CD4-positive, alpha-beta T cell (primary cell): ENCODE measurements at regions of chr7 and their contacts with region 1.

Region 1: DNA sequence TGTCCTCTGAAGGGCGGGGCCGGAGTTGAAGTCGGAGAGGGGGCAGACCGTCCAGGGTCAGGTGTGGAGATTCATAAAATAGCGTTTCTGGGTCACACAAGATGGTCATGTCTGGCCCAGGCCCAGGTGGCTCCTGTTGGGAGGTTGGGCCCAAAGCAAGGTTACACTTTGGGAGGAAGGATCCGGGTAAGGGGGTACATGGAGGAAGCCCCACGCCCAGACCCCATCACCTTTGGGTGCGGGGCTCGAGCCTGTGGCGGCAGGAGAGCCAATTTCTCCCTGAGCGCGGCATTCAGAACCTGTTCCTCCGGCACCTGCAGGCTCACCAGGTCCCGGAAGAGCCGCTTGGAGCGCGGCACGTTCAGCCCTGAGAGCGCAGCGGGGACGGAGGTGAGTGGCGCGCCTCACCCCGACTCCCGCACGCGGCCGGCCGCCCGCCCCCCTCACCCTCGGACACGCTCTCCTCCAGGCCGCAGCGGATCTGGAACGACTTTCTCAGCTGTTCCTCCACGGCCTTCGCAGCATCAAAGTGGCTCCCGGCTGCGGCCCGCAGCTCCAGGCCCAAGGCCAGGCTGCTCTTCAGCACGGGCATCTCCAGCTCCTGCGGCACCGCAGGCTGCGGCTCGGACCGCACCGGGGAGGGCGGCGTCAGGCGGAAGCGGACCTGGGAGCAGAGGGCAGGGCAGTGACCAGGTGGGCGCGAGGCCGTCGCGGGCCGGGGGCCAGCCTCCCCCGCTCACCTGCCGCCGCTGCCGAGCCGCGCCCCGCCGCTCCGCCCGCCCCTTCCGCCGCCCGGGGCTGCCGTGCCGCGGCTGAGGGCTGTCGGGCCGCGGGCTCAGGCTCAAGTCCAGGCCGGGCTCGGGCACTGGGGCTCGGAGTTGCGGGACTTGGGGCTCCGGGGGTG is 644 bp downstream of the PPP1R35 start:
- DNase-seq: peak; percentile 29 to 77 (median 48)
- ATAC-seq: peak; percentile 48
- H3K4me3 ChIP-seq: peak overlapping the region; percentile 67
- H3K4me3 Mint-ChIP-seq: peak overlapping the region; percentile 95
- H3K27ac ChIP-seq: peak overlapping the region; percentile 87 to 90
- H3K27ac Mint-ChIP-seq: peak overlapping the region; percentile 100
- H3K4me1 ChIP-seq: peaks cover 57% of the 10 kb centered on the region
- H3K4me1 Mint-ChIP-seq: peaks cover 48% of the 10 kb centered on the region
- H3K27me3 ChIP-seq: no peaks in the 10 kb centered on the region
- H3K27me3 Mint-ChIP-seq: no peaks in the 10 kb centered on the region
- CTCF ChIP-seq: no peak

Region 2: DNA sequence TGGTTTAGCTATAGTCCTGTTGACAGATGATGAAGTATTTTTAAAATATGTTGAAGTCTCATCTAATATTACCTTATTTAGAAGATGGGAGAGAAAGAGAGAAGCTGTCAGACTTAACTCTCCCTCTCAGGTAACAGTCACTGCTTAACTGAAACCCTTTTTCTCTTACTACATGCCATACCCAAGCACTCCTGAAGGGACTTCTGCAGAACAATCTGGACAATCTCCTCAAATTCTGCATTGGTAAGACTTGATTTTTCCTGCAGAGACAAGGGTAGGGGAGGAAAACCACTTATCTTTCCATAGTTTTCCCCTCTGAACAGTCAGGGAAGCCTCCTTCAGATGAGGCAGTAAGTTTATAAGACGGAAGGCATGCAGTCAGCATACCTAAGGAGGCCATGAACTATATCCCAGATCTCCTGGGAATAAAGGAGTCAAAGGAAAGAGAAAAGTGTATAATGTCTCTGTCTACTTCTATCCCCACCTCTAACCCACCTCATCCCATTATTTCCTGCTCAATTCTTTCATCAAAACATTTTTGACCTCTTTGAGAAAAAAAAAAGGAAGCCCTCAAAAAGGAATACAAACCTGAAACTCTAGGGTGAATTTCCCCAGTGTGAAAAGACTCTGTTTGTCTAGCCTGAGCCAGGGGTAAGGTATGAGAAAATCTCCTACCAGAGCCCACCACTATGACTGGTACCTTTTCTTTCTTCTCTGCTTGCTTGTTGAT is 16.6 kb before region 1 on chr7:
- CTCF ChIA-PET with region 1: no interaction called
- POLR2A ChIA-PET with region 1: no interaction called
- intact Hi-C with region 1: no loop called
- DNase-seq: no peak
- ATAC-seq: no peak
- H3K4me3 ChIP-seq: no peak overlapping the region
- H3K4me3 Mint-ChIP-seq: no peak overlapping the region
- H3K27ac ChIP-seq: no peak overlapping the region
- H3K27ac Mint-ChIP-seq: no peak overlapping the region
- H3K4me1 ChIP-seq: no peaks in the 10 kb centered on the region
- H3K4me1 Mint-ChIP-seq: no peaks in the 10 kb centered on the region
- H3K27me3 ChIP-seq: no peaks in the 10 kb centered on the region
- H3K27me3 Mint-ChIP-seq: no peaks in the 10 kb centered on the region
- CTCF ChIP-seq: no peak

Region 3: DNA sequence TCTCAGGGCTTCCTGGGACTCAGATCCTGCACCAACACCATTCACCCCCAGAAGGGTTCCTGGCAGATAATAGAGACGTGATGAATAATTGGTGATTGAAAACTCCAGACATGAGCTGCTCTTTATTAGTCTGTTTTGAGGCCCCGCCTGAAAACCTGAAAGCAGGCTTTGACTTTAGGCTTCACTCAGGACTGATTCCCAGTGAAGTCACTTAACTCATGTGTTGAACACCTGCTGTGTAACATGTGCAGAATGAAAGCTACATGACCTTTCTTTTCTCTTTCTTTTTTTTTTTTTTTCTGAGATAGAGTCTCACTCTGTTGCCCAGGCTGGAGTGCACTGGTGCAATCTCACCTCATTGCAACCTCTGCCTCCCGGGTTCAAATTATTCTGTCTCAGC is 19.6 kb after region 1 on chr7:
- CTCF ChIA-PET with region 1: interaction called, 5 read pairs
- POLR2A ChIA-PET with region 1: interaction called, 22 read pairs
- intact Hi-C with region 1: loop called (anchors 2 kb)
- DNase-seq: no peak
- ATAC-seq: no peak
- H3K4me3 ChIP-seq: no peak overlapping the region
- H3K4me3 Mint-ChIP-seq: peak overlapping the region; percentile 38
- H3K27ac ChIP-seq: no peak overlapping the region
- H3K27ac Mint-ChIP-seq: peak overlapping the region; percentile 85
- H3K4me1 ChIP-seq: peaks cover 23% of the 10 kb centered on the region
- H3K4me1 Mint-ChIP-seq: peaks cover 23% of the 10 kb centered on the region
- H3K27me3 ChIP-seq: no peaks in the 10 kb centered on the region
- H3K27me3 Mint-ChIP-seq: no peaks in the 10 kb centered on the region
- CTCF ChIP-seq: no peak